ENCODE measurements at regions of chr7 and their contacts with region 1.

Region 1: DNA sequence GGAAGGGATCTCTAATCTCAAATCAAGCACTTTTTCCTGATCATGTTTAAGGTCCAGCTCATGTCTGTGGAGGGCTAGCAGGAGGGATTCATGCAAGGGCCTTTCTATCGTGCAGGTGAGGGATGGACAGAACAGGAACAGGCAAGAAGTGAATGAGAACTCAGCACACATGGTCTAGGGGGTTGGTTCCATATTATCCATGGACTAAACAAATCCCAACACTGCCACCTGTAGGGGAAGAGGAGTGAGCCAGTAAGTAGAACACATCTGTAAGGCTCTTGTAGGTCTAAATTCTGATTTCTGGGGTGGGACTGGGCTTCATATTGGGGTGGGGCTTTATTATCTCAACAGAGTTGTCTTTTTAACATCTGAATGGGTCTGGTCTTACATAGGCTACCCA is 138.0 kb upstream of the TARP start:
- DNase-seq: peak in 1 of 35 experiments; percentile 19
- ATAC-seq: peak in 1 of 4 experiments; percentile 33
- H3K4me3 ChIP-seq: no peak overlapping the region
- H3K4me3 Mint-ChIP-seq: peak overlapping the region in 1 of 3 donors; percentile 12
- H3K27ac ChIP-seq: no peak overlapping the region
- H3K27ac Mint-ChIP-seq: no peak overlapping the region
- H3K4me1 ChIP-seq: peaks cover 0 to 12% of the 10 kb centered on the region in 2 experiments
- H3K4me1 Mint-ChIP-seq: peaks cover 17 to 33% (median 23%) of the 10 kb centered on the region in 3 donors
- H3K27me3 ChIP-seq: no peaks in the 10 kb centered on the region
- H3K27me3 Mint-ChIP-seq: peaks cover 0 to 2% of the 10 kb centered on the region in 2 donors

Region 2: DNA sequence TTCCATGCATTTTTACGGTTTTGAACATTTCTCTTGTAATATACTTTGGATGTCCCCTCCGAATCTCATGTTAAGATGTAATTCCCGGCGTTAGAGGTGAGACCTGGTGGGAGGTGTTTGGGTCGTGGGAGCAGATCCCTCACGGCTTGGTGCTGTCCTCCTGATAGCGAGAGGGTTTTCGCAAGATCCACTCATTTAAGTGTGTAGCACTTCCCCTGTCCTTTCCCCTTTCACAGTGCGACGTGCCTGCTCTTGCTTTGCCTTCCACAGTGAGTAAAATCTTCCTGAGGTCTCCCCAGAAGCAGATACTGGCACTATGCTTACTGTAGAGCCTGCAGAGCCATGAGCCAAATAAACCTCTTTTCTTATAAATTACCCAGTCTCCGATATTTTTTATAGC is 721.2 kb before region 1 on chr7:
- CTCF ChIA-PET with region 1: no interaction called
- POLR2A ChIA-PET with region 1: no interaction called
- DNase-seq: no peak
- ATAC-seq: no peak
- H3K4me3 ChIP-seq: no peak overlapping the region
- H3K4me3 Mint-ChIP-seq: peak overlapping the region in 1 of 3 donors; percentile 9
- H3K27ac ChIP-seq: no peak overlapping the region
- H3K27ac Mint-ChIP-seq: no peak overlapping the region
- H3K4me1 ChIP-seq: no peaks in the 10 kb centered on the region
- H3K4me1 Mint-ChIP-seq: no peaks in the 10 kb centered on the region
- H3K27me3 ChIP-seq: peaks cover 0 to 9% of the 10 kb centered on the region in 2 experiments
- H3K27me3 Mint-ChIP-seq: peaks cover 4 to 7% of the 10 kb centered on the region in 2 donors

Region 3: DNA sequence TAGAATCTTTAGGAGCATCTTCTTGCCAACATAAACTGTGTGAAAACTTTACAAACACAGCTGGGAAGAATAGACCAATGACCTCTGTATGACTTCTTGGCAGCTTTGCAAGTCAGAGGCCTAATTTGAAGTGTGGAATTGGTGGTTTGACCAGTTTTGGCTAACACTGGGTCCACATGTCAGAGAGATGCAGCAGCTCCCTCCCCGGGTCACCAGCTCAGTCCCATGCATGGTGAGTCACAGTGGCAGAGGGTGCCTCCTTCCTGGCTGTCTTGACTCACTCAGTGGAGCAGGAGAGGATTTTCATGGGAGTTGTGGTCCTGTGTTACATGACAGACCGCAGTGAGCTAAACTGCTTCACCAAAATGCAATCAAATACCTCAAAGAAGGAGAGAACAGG is 241.6 kb before region 1 on chr7:
- CTCF ChIA-PET with region 1: no interaction called
- POLR2A ChIA-PET with region 1: interaction called in 1 of 2 experiments, 11 read pairs
- DNase-seq: peak in 1 of 35 experiments; percentile 2
- ATAC-seq: no peak
- H3K4me3 ChIP-seq: no peak overlapping the region
- H3K4me3 Mint-ChIP-seq: no peak overlapping the region
- H3K27ac ChIP-seq: no peak overlapping the region
- H3K27ac Mint-ChIP-seq: no peak overlapping the region
- H3K4me1 ChIP-seq: no peaks in the 10 kb centered on the region
- H3K4me1 Mint-ChIP-seq: peaks cover 0 to 9% (median 4%) of the 10 kb centered on the region in 3 donors
- H3K27me3 ChIP-seq: no peaks in the 10 kb centered on the region
- H3K27me3 Mint-ChIP-seq: peaks cover 17 to 23% of the 10 kb centered on the region in 2 donors

Region 4: DNA sequence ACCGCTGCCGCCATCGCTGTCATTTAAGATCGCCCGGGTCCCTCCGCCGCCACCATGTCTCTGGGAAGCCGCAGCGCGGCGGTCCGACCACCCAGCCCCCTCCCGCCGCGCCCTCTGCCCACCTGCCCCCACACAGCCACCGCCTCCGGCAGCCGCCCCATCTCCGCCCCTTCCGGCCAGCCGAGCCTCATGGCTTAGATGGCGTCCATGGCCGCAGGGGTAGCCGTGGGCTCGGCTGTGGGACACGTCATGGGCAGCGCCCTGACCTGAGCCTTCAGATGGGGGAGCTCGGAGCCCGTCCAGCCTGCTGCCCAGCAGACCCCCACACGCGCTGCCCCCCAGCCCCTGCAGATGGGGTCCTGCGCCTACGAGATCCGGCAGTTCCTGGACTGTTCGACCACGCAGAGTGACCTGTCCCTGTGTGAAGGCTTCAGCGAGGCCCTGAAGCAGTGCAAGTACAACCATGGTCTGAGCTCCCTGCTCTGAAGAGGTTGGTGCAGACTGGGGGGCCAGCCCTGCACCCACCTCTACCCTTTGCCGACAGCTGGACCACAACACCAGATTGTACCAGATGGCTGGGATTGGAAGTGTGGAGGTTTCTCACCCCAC is 100.0 kb before region 1 on chr7:
- CTCF ChIA-PET with region 1: no interaction called
- POLR2A ChIA-PET with region 1: no interaction called
- DNase-seq: no peak
- ATAC-seq: peak in 1 of 4 experiments; percentile 30
- H3K4me3 ChIP-seq: peak overlapping the region in 1 of 2 donors; percentile 30
- H3K4me3 Mint-ChIP-seq: peak overlapping the region; percentile 60 to 75 (median 69)
- H3K27ac ChIP-seq: peak overlapping the region; percentile 55
- H3K27ac Mint-ChIP-seq: peak overlapping the region; percentile 87 to 91
- H3K4me1 ChIP-seq: peaks cover 9 to 31% of the 10 kb centered on the region in 2 experiments
- H3K4me1 Mint-ChIP-seq: peaks cover 6 to 43% (median 22%) of the 10 kb centered on the region in 3 donors
- H3K27me3 ChIP-seq: no peaks in the 10 kb centered on the region
- H3K27me3 Mint-ChIP-seq: no peaks in the 10 kb centered on the region

Measured in T-cell (primary cell).